H1 (cell line): ENCODE measurements at regions of chr11 and their contacts with region 1.

Region 1: GRCh38 chr11:6544921-6545850 is 48.1 kb downstream of the DNHD1 start:
- DNase-seq: no peak
- H3K4me3 ChIP-seq: no peak overlapping the region
- H3K27ac ChIP-seq: no peak overlapping the region; the same call in 1 of the 2 replicates
- H3K4me1 ChIP-seq: no peaks in the 10 kb centered on the region
- H3K27me3 ChIP-seq: no peaks in the 10 kb centered on the region
- CTCF ChIP-seq: no peak
- EP300 ChIP-seq: no peak
- POLR2A ChIP-seq: no peak
- RAD21 ChIP-seq: no peak

Region 2: DNA sequence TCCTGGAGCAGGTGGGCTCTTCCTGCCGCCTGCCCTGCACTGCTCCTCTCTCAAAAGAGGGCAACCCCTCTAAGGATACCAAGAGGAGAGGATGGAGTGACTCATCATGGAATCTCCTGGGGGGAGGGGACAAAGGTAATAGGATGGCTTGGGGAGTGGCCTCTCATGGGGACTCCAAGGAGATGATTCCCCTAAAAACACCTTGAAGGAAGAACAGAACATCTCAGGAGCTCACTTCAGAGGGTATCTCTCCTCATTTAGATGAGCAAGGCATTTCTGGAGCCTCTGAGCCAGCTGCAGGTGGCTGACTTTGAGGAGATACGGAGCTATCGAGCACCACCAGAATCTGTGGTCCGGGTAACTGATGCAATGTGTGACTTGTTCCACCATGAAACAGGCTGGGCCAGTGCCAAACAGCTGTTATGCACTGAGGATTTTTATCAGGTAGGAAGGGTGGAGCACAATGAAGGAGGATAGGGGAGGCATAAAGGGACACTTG is 18.0 kb after region 1 on chr11:
- CTCF ChIA-PET with region 1: interaction called, 20 read pairs
- POLR2A ChIA-PET with region 1: no interaction called
- DNase-seq: no peak
- H3K4me3 ChIP-seq: no peak overlapping the region
- H3K27ac ChIP-seq: no peak overlapping the region
- H3K4me1 ChIP-seq: peaks cover 0 to 7% (median 2%) of the 10 kb centered on the region in 4 experiments; a peak in 4 of 7 replicates
- H3K27me3 ChIP-seq: peaks cover 0 to 2% (median 0%) of the 10 kb centered on the region in 4 experiments; a peak in 1 of 7 replicates
- CTCF ChIP-seq: no peak
- EP300 ChIP-seq: no peak
- POLR2A ChIP-seq: no peak
- RAD21 ChIP-seq: no peak

Region 3: GRCh38 chr11:6646071-6646470 is 100.9 kb after region 1 on chr11:
- CTCF ChIA-PET with region 1: no interaction called
- POLR2A ChIA-PET with region 1: no interaction called
- DNase-seq: no peak
- H3K4me3 ChIP-seq: no peak overlapping the region
- H3K27ac ChIP-seq: no peak overlapping the region
- H3K4me1 ChIP-seq: peaks cover 3 to 10% (median 5%) of the 10 kb centered on the region in 4 experiments; a peak in 6 of 7 replicates
- H3K27me3 ChIP-seq: no peaks in the 10 kb centered on the region; a peak in 1 of 7 replicates
- CTCF ChIP-seq: no peak
- EP300 ChIP-seq: no peak
- POLR2A ChIP-seq: no peak
- RAD21 ChIP-seq: no peak